GM12878 (cell line): ENCODE measurements at regions of chr2 and their contacts with region 1.

Region 1: GRCh38 chr2:159146996-159147666 is 139.4 kb downstream of the WDSUB1 start:
- DNase-seq: no peak
- ATAC-seq: no peak; the same call in 2 of the 3 replicates
- H3K4me3 ChIP-seq: no peak overlapping the region
- H3K27ac ChIP-seq: no peak overlapping the region
- H3K4me1 ChIP-seq: peaks cover 12% of the 10 kb centered on the region
- H3K27me3 ChIP-seq: no peaks in the 10 kb centered on the region
- CTCF ChIP-seq: no peak
- EP300 ChIP-seq: no peak
- POLR2A ChIP-seq: no peak
- RAD21 ChIP-seq: no peak

Region 2: GRCh38 chr2:159133797-159134196 is 13.3 kb before region 1 on chr2:
- CTCF ChIA-PET with region 1: no interaction called
- POLR2A ChIA-PET with region 1: interaction called, 3 read pairs
- RAD21 ChIA-PET with region 1: no interaction called
- SMC1A ChIA-PET with region 1: interaction called, 10 read pairs
- in situ Hi-C with region 1: no loop called
- intact Hi-C with region 1: no loop called
- DNase-seq: no peak
- ATAC-seq: peak; percentile 40; the same call in 2 of the 3 replicates
- H3K4me3 ChIP-seq: no peak overlapping the region
- H3K27ac ChIP-seq: no peak overlapping the region
- H3K4me1 ChIP-seq: no peaks in the 10 kb centered on the region
- H3K27me3 ChIP-seq: no peaks in the 10 kb centered on the region; a peak in 1 of 4 replicates
- CTCF ChIP-seq: peak in 2 of 3 experiments; percentile 4 to 41; a peak in 1 of 6 replicates
- EP300 ChIP-seq: no peak
- POLR2A ChIP-seq: no peak
- RAD21 ChIP-seq: peak; percentile 44; the same call in 1 of the 2 replicates

Region 3: GRCh38 chr2:159201360-159202063 is 54.4 kb after region 1 on chr2:
- CTCF ChIA-PET with region 1: no interaction called
- POLR2A ChIA-PET with region 1: no interaction called
- RAD21 ChIA-PET with region 1: no interaction called
- SMC1A ChIA-PET with region 1: no interaction called
- in situ Hi-C with region 1: no loop called
- intact Hi-C with region 1: loop called (anchors 5 kb)
- DNase-seq: peak; percentile 42
- ATAC-seq: peak; percentile 98
- H3K4me3 ChIP-seq: no peak overlapping the region
- H3K27ac ChIP-seq: peak overlapping the region; percentile 16; the same call in 1 of the 2 replicates
- H3K4me1 ChIP-seq: peaks cover 13% of the 10 kb centered on the region
- H3K27me3 ChIP-seq: no peaks in the 10 kb centered on the region
- CTCF ChIP-seq: no peak
- EP300 ChIP-seq: peak in 1 of 2 experiments; percentile 71; a peak in 2 of 4 replicates
- POLR2A ChIP-seq: no peak
- RAD21 ChIP-seq: no peak